B cell (primary cell): ENCODE measurements at regions of chr5 and their contacts with region 1.

Region 1: GRCh38 chr5:56481428-56482357 is 248.6 kb upstream of the ANKRD55 start:
- DNase-seq: peak; percentile 72
- ATAC-seq: peak; percentile 18
- H3K4me3 ChIP-seq: peak overlapping the region; percentile 56 to 76 (median 65)
- H3K4me3 Mint-ChIP-seq: peak overlapping the region; percentile 95
- H3K27ac ChIP-seq: peak overlapping the region; percentile 93 to 96
- H3K27ac Mint-ChIP-seq: peak overlapping the region; percentile 97
- H3K4me1 ChIP-seq: peaks cover 42 to 57% of the 10 kb centered on the region in 2 donors
- H3K4me1 Mint-ChIP-seq: peaks cover 41% of the 10 kb centered on the region
- H3K27me3 ChIP-seq: no peaks in the 10 kb centered on the region
- H3K27me3 Mint-ChIP-seq: no peaks in the 10 kb centered on the region
- CTCF ChIP-seq: peak; percentile 52

Region 2: GRCh38 chr5:56211298-56211865 is 270.3 kb before region 1 on chr5:
- CTCF ChIA-PET with region 1: no interaction called
- POLR2A ChIA-PET with region 1: no interaction called
- intact Hi-C with region 1: no loop called
- DNase-seq: no peak
- ATAC-seq: no peak
- H3K4me3 ChIP-seq: no peak overlapping the region
- H3K4me3 Mint-ChIP-seq: no peak overlapping the region
- H3K27ac ChIP-seq: no peak overlapping the region
- H3K27ac Mint-ChIP-seq: no peak overlapping the region
- H3K4me1 ChIP-seq: no peaks in the 10 kb centered on the region
- H3K4me1 Mint-ChIP-seq: no peaks in the 10 kb centered on the region
- H3K27me3 ChIP-seq: no peaks in the 10 kb centered on the region
- H3K27me3 Mint-ChIP-seq: peaks cover 8% of the 10 kb centered on the region
- CTCF ChIP-seq: no peak

Region 3: GRCh38 chr5:56314529-56314928 is 167.2 kb before region 1 on chr5:
- CTCF ChIA-PET with region 1: no interaction called
- POLR2A ChIA-PET with region 1: no interaction called
- intact Hi-C with region 1: loop called (anchors 10 kb)
- DNase-seq: no peak
- ATAC-seq: no peak
- H3K4me3 ChIP-seq: no peak overlapping the region
- H3K4me3 Mint-ChIP-seq: peak overlapping the region; percentile 9
- H3K27ac ChIP-seq: no peak overlapping the region
- H3K27ac Mint-ChIP-seq: no peak overlapping the region
- H3K4me1 ChIP-seq: peaks cover 37 to 54% of the 10 kb centered on the region in 2 donors
- H3K4me1 Mint-ChIP-seq: peaks cover 56% of the 10 kb centered on the region
- H3K27me3 ChIP-seq: no peaks in the 10 kb centered on the region
- H3K27me3 Mint-ChIP-seq: no peaks in the 10 kb centered on the region
- CTCF ChIP-seq: peak; percentile 67

Region 4: DNA sequence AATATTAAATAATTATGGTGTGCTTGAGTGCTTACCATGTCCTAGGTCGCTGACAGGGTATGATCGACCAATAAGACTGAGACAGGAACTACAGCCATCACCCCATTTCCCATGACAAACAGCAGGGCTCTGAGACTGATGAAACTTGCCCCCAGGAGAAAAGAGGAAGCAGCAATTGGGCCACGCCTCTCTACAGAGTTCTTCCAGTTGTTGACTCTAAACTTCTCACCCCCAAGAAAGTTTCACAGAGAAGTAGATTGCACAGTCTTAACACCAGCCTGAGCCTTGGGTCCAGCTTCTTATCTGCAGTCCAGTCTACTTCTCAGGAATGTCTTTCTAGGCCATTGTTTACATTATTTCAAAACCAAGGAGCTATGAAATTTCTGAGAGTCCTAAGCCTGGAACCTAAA is 66.3 kb before region 1 on chr5:
- CTCF ChIA-PET with region 1: interaction called, 6 read pairs
- POLR2A ChIA-PET with region 1: interaction called, 6 read pairs
- intact Hi-C with region 1: loop called (anchors 1 kb)
- DNase-seq: peak; percentile 89
- ATAC-seq: peak; percentile 71
- H3K4me3 ChIP-seq: peak overlapping the region in 3 of 5 experiments; percentile 21 to 56 (median 21)
- H3K4me3 Mint-ChIP-seq: peak overlapping the region; percentile 76
- H3K27ac ChIP-seq: peak overlapping the region; percentile 95 to 98
- H3K27ac Mint-ChIP-seq: peak overlapping the region; percentile 96
- H3K4me1 ChIP-seq: peaks cover 73 to 74% of the 10 kb centered on the region in 2 donors
- H3K4me1 Mint-ChIP-seq: peaks cover 80% of the 10 kb centered on the region
- H3K27me3 ChIP-seq: no peaks in the 10 kb centered on the region
- H3K27me3 Mint-ChIP-seq: no peaks in the 10 kb centered on the region
- CTCF ChIP-seq: no peak

Region 5: DNA sequence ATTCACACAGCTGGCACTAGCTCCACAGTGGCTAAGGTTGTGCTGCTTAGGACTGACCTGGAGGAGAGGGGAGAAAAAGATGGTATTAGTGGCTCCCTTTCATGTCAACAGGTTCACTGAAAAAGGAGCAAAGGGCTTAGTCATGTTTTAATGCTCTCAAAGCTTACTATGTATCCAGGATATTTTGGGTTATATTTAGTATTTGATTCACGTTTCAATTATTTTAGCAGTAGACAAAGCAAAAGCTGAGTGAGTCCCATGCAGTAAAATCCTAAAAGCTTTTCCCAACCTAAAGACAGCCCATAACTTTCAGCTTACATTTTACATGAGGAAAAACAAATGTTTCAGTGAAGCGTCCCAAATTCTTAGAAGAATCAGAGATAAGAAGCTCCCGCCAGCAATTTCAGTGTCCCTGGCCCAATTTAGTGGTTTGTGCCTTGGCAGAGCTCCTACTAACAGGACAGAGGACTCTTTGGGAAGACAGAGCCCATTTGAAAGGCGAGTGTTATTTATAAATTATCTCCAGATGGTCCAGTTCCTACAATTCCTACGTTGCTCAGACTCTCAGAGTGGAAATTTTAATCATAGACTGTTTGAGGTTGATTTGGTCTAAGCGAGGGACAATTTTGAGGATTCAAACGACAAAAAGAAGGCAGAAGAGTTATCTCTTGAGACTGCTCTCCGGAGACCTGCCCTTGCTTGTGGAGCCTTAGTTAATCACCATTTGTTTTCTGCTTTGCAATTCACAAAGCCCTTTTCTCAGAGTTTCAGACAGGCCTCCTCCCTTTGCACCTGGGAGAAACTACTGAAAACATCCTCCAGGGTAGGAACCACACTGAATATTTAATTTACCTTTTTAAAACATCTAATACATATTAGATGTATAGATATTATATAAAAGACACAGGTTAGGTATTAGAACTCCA is 23.5 kb before region 1 on chr5:
- CTCF ChIA-PET with region 1: no interaction called
- POLR2A ChIA-PET with region 1: no interaction called
- intact Hi-C with region 1: no loop called
- DNase-seq: no peak
- ATAC-seq: no peak
- H3K4me3 ChIP-seq: no peak overlapping the region
- H3K4me3 Mint-ChIP-seq: no peak overlapping the region
- H3K27ac ChIP-seq: no peak overlapping the region
- H3K27ac Mint-ChIP-seq: no peak overlapping the region
- H3K4me1 ChIP-seq: no peaks in the 10 kb centered on the region
- H3K4me1 Mint-ChIP-seq: peaks cover 5% of the 10 kb centered on the region
- H3K27me3 ChIP-seq: no peaks in the 10 kb centered on the region
- H3K27me3 Mint-ChIP-seq: no peaks in the 10 kb centered on the region
- CTCF ChIP-seq: no peak

Region 6: GRCh38 chr5:56588636-56589480 is 107.2 kb after region 1 on chr5:
- CTCF ChIA-PET with region 1: interaction called, 22 read pairs
- POLR2A ChIA-PET with region 1: interaction called, 18 read pairs
- intact Hi-C with region 1: loop called (anchors 1 kb)
- DNase-seq: peak; percentile 98
- ATAC-seq: peak; percentile 85
- H3K4me3 ChIP-seq: peak overlapping the region in 3 of 5 experiments; percentile 22 to 41 (median 25)
- H3K4me3 Mint-ChIP-seq: peak overlapping the region; percentile 59
- H3K27ac ChIP-seq: peak overlapping the region; percentile 99 to 100
- H3K27ac Mint-ChIP-seq: peak overlapping the region; percentile 96
- H3K4me1 ChIP-seq: peaks cover 63 to 67% of the 10 kb centered on the region in 2 donors
- H3K4me1 Mint-ChIP-seq: peaks cover 77% of the 10 kb centered on the region
- H3K27me3 ChIP-seq: no peaks in the 10 kb centered on the region
- H3K27me3 Mint-ChIP-seq: no peaks in the 10 kb centered on the region
- CTCF ChIP-seq: no peak

Region 7: DNA sequence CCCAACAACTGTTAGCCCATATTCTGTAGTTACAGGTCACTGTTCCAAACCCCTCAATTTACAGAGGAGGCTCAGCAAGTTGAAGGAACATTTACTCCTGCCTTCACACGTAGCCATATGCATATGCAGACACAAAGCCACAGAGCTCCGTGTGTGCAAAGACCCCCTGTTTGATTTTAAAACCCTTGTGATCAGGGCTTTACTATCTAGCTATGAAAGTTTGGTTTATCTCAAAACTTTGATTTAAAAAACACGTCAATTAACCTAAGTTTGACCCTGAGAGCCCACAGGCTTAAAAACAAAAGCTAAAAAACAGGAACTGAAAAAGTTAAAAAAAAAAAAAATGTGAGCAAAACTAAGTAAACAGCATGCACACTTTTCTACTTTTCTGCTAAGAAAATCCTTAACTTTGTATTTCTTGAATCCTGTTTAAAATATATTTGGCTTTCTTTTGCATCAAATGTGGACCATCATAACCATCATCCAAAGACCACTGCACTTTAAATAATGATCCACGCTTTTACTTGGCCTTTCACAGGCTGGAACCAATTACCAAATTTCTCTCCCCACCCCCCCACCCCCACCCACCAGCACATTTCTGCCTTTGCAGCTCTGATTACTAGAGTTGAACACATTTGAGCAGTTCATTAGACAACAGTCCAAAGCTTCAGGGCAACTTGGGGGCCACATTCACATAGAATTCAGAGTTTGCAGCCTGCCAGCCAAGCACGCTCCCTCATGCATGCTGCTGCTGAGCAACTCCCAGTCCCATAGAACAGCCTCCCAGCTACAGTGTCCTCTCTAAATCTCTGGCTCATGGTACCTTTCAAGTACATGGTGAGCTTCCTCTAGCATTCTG is 204.9 kb after region 1 on chr5:
- CTCF ChIA-PET with region 1: interaction called, 12 read pairs
- POLR2A ChIA-PET with region 1: interaction called, 30 read pairs
- intact Hi-C with region 1: loop called (anchors 5 kb)
- DNase-seq: peak; percentile 82
- ATAC-seq: peak; percentile 78
- H3K4me3 ChIP-seq: peak overlapping the region in 1 of 5 experiments; percentile 33
- H3K4me3 Mint-ChIP-seq: peak overlapping the region; percentile 74
- H3K27ac ChIP-seq: peak overlapping the region; percentile 93 to 97
- H3K27ac Mint-ChIP-seq: peak overlapping the region; percentile 95
- H3K4me1 ChIP-seq: peaks cover 93% of the 10 kb centered on the region in 2 donors
- H3K4me1 Mint-ChIP-seq: peaks cover 94% of the 10 kb centered on the region
- H3K27me3 ChIP-seq: no peaks in the 10 kb centered on the region
- H3K27me3 Mint-ChIP-seq: no peaks in the 10 kb centered on the region
- CTCF ChIP-seq: no peak

Region 8: GRCh38 chr5:56814963-56815658 is 333.4 kb after region 1 on chr5 and contains the start of gene MAP3K1:
- CTCF ChIA-PET with region 1: interaction called, 4 read pairs
- POLR2A ChIA-PET with region 1: interaction called, 3 read pairs
- intact Hi-C with region 1: loop called (anchors 1 kb)
- DNase-seq: peak; percentile 93
- ATAC-seq: peak; percentile 65
- H3K4me3 ChIP-seq: peak within 1 kb of the TSS; percentile 73 to 97 (median 87)
- H3K4me3 Mint-ChIP-seq: peak within 1 kb of the TSS; percentile 97
- H3K27ac ChIP-seq: peak within 1 kb of the TSS; percentile 91 to 94
- H3K27ac Mint-ChIP-seq: peak within 1 kb of the TSS; percentile 99
- H3K4me1 ChIP-seq: peaks cover 25 to 29% of the 10 kb centered on the region in 2 donors
- H3K4me1 Mint-ChIP-seq: peaks cover 44% of the 10 kb centered on the region
- H3K27me3 ChIP-seq: no peaks in the 10 kb centered on the region
- H3K27me3 Mint-ChIP-seq: no peaks in the 10 kb centered on the region
- CTCF ChIP-seq: no peak
- total RNA-seq, gene MAP3K1: 160 and 164 TPM in 2 replicates

Region 9: GRCh38 chr5:56829137-56829908 is 347.6 kb after region 1 on chr5:
- CTCF ChIA-PET with region 1: no interaction called
- POLR2A ChIA-PET with region 1: no interaction called
- intact Hi-C with region 1: no loop called
- DNase-seq: peak; percentile 79
- ATAC-seq: peak; percentile 88
- H3K4me3 ChIP-seq: peak overlapping the region in 3 of 5 experiments; percentile 7 to 39 (median 25)
- H3K4me3 Mint-ChIP-seq: peak overlapping the region; percentile 82
- H3K27ac ChIP-seq: peak overlapping the region; percentile 53 to 85
- H3K27ac Mint-ChIP-seq: peak overlapping the region; percentile 85
- H3K4me1 ChIP-seq: peaks cover 84 to 96% of the 10 kb centered on the region in 2 donors
- H3K4me1 Mint-ChIP-seq: peaks cover 86% of the 10 kb centered on the region
- H3K27me3 ChIP-seq: no peaks in the 10 kb centered on the region
- H3K27me3 Mint-ChIP-seq: no peaks in the 10 kb centered on the region
- CTCF ChIP-seq: no peak